K562 (cell line): ENCODE measurements at regions of chr20 and their contacts with region 1.

Region 1: GRCh38 chr20:34022154-34022838 is 28.6 kb downstream of the RALY start:
- DNase-seq: peak in 2 of 4 experiments; percentile 42 to 60
- ATAC-seq: peak; percentile 88
- H3K4me3 ChIP-seq: no peak overlapping the region
- H3K27ac ChIP-seq: no peak overlapping the region
- H3K4me1 ChIP-seq: peaks cover 4 to 14% of the 10 kb centered on the region in 2 experiments; a peak in 4 of 5 replicates
- H3K27me3 ChIP-seq: no peaks in the 10 kb centered on the region
- CTCF ChIP-seq: peak; percentile 59 to 66 (median 61); a peak in 4 of 6 replicates
- EP300 ChIP-seq: no peak
- POLR2A ChIP-seq: no peak
- RAD21 ChIP-seq: peak in 1 of 2 experiments; percentile 65; a peak in 2 of 4 replicates

Region 2: DNA sequence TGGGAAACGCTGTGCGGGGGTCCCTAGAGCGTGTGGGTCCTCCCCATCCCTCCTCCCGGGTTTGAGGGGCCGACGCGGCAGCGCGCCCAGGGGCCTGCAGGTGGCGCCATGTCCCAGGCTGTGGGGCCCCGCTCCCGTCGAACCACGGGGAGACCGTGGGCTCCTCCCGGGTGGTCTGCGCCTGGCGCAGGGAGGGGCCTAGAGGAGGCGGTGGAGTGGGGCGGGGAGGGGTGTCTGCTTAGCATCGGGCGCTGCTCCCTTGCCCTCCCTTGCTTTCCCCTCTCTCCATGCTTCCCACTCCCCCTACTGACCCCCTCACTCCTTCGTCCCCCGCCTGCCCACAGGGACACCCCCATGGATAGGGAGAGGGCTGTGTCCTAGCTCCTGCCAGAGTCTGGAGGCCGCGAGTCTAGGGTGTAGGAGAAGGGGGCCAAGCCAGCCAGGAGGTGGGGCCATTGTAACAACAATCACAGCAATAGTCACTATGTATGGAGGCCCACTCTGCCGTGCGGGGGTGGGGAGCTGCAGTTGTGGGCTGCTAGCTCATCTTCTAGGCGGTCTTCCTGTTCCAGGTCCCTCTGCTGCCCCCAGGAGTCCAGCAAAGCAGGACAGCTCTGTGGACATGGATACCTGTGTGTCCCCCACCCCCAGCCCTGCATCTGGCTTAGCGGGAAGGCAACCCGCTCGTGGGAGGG is 159.4 kb before region 1 on chr20:
- CTCF ChIA-PET with region 1: no interaction called
- POLR2A ChIA-PET with region 1: interaction called, 3 read pairs
- in situ Hi-C with region 1: no loop called
- intact Hi-C with region 1: loop called (anchors 5 kb)
- DNase-seq: peak; percentile 62 to 88 (median 84)
- ATAC-seq: peak; percentile 87
- H3K4me3 ChIP-seq: peak overlapping the region; percentile 23; the same call in 1 of the 2 replicates
- H3K27ac ChIP-seq: no peak overlapping the region
- H3K4me1 ChIP-seq: peaks cover 0 to 13% of the 10 kb centered on the region in 2 experiments; a peak in 3 of 5 replicates
- H3K27me3 ChIP-seq: peaks cover 11 to 34% of the 10 kb centered on the region in 2 experiments; a peak in 4 of 5 replicates
- CTCF ChIP-seq: peak; percentile 73 to 82 (median 79)
- EP300 ChIP-seq: no peak
- POLR2A ChIP-seq: no peak
- RAD21 ChIP-seq: peak; percentile 43 to 69; a peak in 3 of 4 replicates

Region 3: DNA sequence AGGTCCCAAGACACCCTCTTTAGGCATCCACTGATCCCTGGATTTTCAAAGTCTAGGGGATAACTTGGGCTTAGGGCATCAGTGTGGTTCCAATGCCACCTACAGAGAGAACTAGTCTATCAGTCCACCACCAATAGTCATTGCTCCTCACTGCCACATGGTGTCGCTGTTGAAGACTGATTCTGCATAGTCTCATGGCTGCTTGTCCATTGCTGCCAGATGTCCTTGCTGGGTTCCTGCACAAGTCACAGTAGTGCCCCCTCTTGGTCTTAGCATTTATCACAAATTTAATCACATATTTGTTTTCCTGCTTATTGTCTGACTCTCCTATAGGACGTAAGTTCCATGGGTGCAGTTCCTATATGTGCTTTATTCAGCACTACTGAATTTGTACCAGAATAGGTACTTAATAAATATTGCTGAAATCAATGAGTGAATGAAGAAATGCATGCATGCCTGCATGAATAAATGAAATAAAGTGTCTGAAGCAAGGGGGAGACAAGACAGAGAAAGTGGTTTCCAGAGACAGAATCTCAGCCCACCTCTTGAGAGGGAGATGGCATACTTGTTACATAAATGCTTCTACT is 74.5 kb before region 1 on chr20:
- CTCF ChIA-PET with region 1: no interaction called
- POLR2A ChIA-PET with region 1: no interaction called
- in situ Hi-C with region 1: no loop called
- intact Hi-C with region 1: loop called (anchors 5 kb)
- DNase-seq: peak; percentile 81 to 91 (median 88)
- ATAC-seq: peak; percentile 94
- H3K4me3 ChIP-seq: no peak overlapping the region
- H3K27ac ChIP-seq: no peak overlapping the region
- H3K4me1 ChIP-seq: no peaks in the 10 kb centered on the region
- H3K27me3 ChIP-seq: peaks cover 0 to 15% of the 10 kb centered on the region in 2 experiments; a peak in 3 of 5 replicates
- CTCF ChIP-seq: peak; percentile 92 to 99 (median 97)
- EP300 ChIP-seq: no peak
- POLR2A ChIP-seq: no peak
- RAD21 ChIP-seq: peak; percentile 58 to 94

Region 4: DNA sequence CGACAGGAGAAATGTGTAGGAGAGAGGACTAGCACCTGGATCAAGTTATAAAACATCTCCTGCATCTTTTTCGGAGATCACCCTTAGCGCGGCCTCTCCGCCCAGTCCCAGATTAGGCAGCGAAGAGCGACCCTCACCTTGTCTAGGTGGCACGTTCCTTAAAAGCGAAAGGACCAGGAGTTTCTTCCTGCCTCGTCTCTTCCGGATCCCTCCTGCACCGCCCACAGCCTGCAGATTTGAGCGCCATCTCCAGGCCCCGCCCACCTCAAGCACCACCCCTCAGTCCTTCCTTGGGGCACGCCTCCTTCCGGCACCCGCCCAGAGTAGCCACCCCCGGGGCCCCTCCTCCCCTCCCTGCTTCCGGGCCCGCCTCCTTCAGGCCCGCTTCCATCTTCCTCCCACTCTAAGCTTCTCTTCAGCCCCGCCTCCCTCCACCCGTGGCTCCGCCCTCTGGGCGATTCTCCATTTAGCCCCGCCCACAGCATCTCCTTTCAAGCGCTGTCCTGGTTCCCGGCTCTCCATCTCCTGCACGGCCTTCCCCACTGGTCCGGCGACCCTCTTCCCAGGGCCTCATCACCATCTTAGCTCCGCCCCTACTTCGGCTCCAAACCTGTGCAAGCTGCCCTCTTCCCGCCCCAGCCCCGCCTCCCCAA is 29.2 kb before region 1 on chr20:
- CTCF ChIA-PET with region 1: no interaction called
- POLR2A ChIA-PET with region 1: no interaction called
- in situ Hi-C with region 1: no loop called
- intact Hi-C with region 1: no loop called
- DNase-seq: peak; percentile 98 to 99 (median 98)
- ATAC-seq: peak; percentile 88
- H3K4me3 ChIP-seq: peak overlapping the region; percentile 97
- H3K27ac ChIP-seq: peak overlapping the region; percentile 94
- H3K4me1 ChIP-seq: peaks cover 23 to 33% of the 10 kb centered on the region in 2 experiments
- H3K27me3 ChIP-seq: no peaks in the 10 kb centered on the region
- CTCF ChIP-seq: no peak
- EP300 ChIP-seq: no peak; the same call in 1 of the 2 replicates
- POLR2A ChIP-seq: peak; percentile 93
- RAD21 ChIP-seq: no peak

Region 5: DNA sequence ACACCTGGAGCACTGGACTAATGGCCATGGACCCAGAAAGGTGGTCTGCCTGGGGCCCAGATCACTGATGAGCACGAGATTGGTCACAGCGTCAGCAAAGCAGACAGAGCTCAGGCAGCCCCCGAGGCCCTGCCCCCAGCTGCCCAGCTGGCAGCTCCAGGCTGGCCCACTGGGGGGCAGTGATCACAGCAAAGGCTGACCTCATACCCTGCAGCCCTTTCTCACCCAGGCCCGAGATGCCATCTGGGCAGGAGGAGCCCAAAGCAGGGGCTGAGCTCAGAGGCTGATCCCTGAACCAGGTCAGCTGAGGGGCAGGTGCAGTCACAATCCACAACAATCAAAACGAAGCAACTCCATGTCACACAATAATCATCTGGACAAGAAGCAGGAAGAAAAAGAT is 540.3 kb after region 1 on chr20:
- CTCF ChIA-PET with region 1: no interaction called
- POLR2A ChIA-PET with region 1: no interaction called
- in situ Hi-C with region 1: no loop called
- intact Hi-C with region 1: no loop called
- DNase-seq: peak in 2 of 4 experiments; percentile 32 to 34
- ATAC-seq: peak; percentile 72
- H3K4me3 ChIP-seq: no peak overlapping the region
- H3K27ac ChIP-seq: no peak overlapping the region
- H3K4me1 ChIP-seq: peaks cover 0 to 19% of the 10 kb centered on the region in 2 experiments; a peak in 2 of 5 replicates
- H3K27me3 ChIP-seq: no peaks in the 10 kb centered on the region
- CTCF ChIP-seq: peak; percentile 22 to 32 (median 25); a peak in 2 of 6 replicates
- EP300 ChIP-seq: no peak
- POLR2A ChIP-seq: no peak
- RAD21 ChIP-seq: peak in 1 of 2 experiments; percentile 22; a peak in 1 of 4 replicates